ENCODE measurements at regions of chr20 and their contacts with region 1.

Region 1: DNA sequence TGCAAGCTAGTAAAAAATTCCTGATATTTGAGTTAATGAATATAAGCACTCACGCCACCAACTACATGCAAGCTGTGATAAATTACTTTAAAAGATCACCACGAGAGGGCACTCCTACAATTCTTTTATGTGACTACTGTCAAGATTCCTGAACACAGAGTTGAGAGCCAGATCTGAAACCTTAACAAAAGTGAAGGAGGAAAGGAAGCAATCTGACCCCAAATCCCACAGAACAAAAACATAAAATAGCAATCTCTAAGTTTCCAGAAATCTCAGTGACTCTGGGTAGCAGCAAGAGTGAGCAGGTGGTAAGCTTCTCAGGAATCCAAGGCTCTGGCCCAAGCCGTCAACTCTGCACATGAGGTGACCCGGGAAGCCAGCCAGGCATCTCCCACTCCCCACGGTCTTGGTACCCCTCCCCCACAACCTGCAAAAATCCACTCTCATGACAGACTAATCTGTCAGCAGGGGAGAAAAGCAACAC is 55.1 kb downstream of the STAU1 start:
- DNase-seq: peak in 3 of 7 donors; percentile 12 to 41 (median 38)
- H3K4me3 ChIP-seq: no peak overlapping the region
- H3K27ac ChIP-seq: peak overlapping the region in 1 of 5 donors; percentile 61
- H3K4me1 ChIP-seq: peaks cover 0 to 5% of the 10 kb centered on the region in 2 donors
- H3K27me3 ChIP-seq: no peaks in the 10 kb centered on the region
- CTCF ChIP-seq: peak; percentile 37 to 80 (median 66)
- POLR2A ChIP-seq: no peak

Region 2: GRCh38 chr20:49100972-49101371 is 32.1 kb before region 1 on chr20:
- intact Hi-C with region 1: no loop called
- DNase-seq: no peak
- H3K4me3 ChIP-seq: peak overlapping the region in 1 of 4 donors; percentile 19
- H3K27ac ChIP-seq: peak overlapping the region in 1 of 5 donors; percentile 13
- H3K4me1 ChIP-seq: peaks cover 0 to 12% of the 10 kb centered on the region in 2 donors
- H3K27me3 ChIP-seq: no peaks in the 10 kb centered on the region
- CTCF ChIP-seq: no peak
- POLR2A ChIP-seq: no peak

Region 3: GRCh38 chr20:49219089-49219923 is 86.3 kb after region 1 on chr20 and contains the start of gene DDX27:
- intact Hi-C with region 1: loop called (anchors 2 to 5 kb)
- DNase-seq: peak; percentile 97 to 99 (median 98)
- H3K4me3 ChIP-seq: peak within 1 kb of the TSS; percentile 34 to 99 (median 64)
- H3K27ac ChIP-seq: peak within 1 kb of the TSS; percentile 27 to 90 (median 73)
- H3K4me1 ChIP-seq: peaks cover 8 to 17% of the 10 kb centered on the region in 2 donors
- H3K27me3 ChIP-seq: no peaks in the 10 kb centered on the region
- CTCF ChIP-seq: no peak
- POLR2A ChIP-seq: peak; percentile 68 to 84
- total RNA-seq, gene DDX27: 18.7 to 34.5 (median 22.5) TPM